Mammary epithelial cell (primary cell): ENCODE measurements at regions of chr12 and their contacts with region 1.

Region 1: DNA sequence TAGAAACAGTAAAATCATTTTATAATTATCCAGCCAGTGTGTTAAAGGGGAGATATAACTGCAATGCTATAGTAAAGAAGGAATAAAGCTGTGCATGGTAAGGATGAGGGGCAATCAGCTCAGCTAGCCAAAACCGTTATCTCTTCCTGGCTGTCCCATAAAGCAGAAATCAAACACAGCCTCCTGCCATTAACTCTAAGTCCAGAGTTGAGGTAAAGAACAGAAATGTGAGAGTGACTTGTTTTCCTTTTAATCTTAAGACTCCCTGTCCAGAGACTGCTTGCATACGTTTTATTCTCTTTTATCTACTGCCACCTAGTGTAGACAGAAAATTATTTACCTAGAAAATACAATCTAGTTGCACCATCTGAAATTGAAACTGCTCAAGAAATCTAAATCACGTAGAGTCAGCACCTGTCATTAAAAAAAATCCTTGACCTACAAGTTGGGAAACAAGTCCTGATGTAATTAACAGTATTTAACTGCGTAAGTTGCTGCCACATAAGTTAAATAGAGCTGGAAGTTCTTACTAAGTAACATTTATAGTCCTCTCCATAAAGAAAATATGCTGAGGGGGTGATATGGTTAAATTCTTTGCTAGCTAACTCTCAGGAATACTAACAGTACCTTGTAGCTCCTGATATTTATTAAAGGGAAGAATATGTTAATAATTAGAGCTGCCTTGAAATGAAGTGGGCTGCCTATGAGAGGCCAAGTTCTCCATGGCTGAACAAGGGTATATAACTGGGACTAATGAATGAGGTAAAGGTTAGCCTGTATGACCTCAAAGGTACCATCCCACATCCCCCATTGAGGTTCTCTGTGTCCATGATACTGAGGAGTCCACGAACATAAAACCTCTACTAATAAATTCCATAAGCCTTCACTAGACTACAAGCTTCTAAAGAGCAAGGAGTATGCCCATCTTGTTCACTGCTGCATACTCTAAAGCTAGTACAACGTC is 62.7 kb downstream of the GALNT4 start:
- DNase-seq: peak; percentile 71
- H3K4me3 ChIP-seq: peak overlapping the region in 2 of 3 experiments; percentile 25 to 34
- H3K27ac ChIP-seq: peak overlapping the region; percentile 31
- H3K4me1 ChIP-seq: peaks cover 22% of the 10 kb centered on the region
- H3K27me3 ChIP-seq: no peaks in the 10 kb centered on the region
- CTCF ChIP-seq: peak in 1 of 2 donors; percentile 52

Region 2: GRCh38 chr12:89040146-89040964 is 421.6 kb before region 1 on chr12:
- CTCF ChIA-PET with region 1: no interaction called
- dilution Hi-C with region 1: loop called (anchors 10 kb)
- in situ Hi-C with region 1: no loop called
- intact Hi-C with region 1: no loop called
- DNase-seq: peak; percentile 78
- H3K4me3 ChIP-seq: no peak overlapping the region
- H3K27ac ChIP-seq: no peak overlapping the region
- H3K4me1 ChIP-seq: no peaks in the 10 kb centered on the region
- H3K27me3 ChIP-seq: no peaks in the 10 kb centered on the region
- CTCF ChIP-seq: no peak

Region 3: DNA sequence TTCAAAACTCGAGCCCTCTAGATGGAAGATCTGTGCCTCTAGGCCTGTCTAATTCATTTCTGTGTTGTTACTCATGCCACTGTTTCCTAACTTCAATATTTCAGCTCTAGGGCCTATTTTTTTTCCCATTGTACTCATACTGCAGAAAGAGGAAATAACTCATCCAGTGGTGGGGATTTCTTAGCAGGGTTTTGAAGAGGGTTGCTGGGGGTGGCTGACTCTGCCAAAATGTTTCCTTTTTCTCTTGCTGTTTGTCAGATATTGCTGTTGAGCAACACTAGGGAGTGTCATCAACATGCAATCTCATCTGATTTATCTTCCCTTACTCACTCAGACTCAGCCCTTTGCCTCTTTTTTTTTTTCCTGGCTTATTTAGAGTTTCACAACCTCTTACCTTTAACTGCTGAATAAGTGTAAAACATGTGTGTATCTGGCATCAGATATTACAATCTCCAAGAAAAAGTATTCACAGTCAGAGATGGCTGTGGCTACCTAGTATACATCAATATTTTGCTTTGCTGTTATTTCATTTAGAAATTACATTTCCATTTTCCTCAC is 299.1 kb before region 1 on chr12:
- CTCF ChIA-PET with region 1: no interaction called
- dilution Hi-C with region 1: no loop called
- in situ Hi-C with region 1: no loop called
- intact Hi-C with region 1: loop called (anchors 5 kb)
- DNase-seq: peak; percentile 100
- H3K4me3 ChIP-seq: no peak overlapping the region
- H3K27ac ChIP-seq: peak overlapping the region; percentile 77
- H3K4me1 ChIP-seq: peaks cover 44% of the 10 kb centered on the region
- H3K27me3 ChIP-seq: no peaks in the 10 kb centered on the region
- CTCF ChIP-seq: no peak

Region 4: GRCh38 chr12:89352492-89353187 is 109.3 kb before region 1 on chr12 and contains the start of gene DUSP6:
- CTCF ChIA-PET with region 1: interaction called, 14 read pairs
- dilution Hi-C with region 1: no loop called
- in situ Hi-C with region 1: loop called (anchors 10 kb)
- intact Hi-C with region 1: loop called (anchors 1 kb)
- DNase-seq: peak; percentile 100
- H3K4me3 ChIP-seq: peak within 1 kb of the TSS; percentile 85 to 93 (median 92)
- H3K27ac ChIP-seq: peak within 1 kb of the TSS; percentile 91
- H3K4me1 ChIP-seq: peaks cover 43% of the 10 kb centered on the region
- H3K27me3 ChIP-seq: no peaks in the 10 kb centered on the region
- CTCF ChIP-seq: no peak
- total RNA-seq, gene DUSP6: 190 to 291 TPM

Region 5: GRCh38 chr12:89384050-89384758 is 77.7 kb before region 1 on chr12:
- CTCF ChIA-PET with region 1: no interaction called
- dilution Hi-C with region 1: loop called (anchors 5 kb)
- in situ Hi-C with region 1: no loop called
- intact Hi-C with region 1: no loop called
- DNase-seq: peak; percentile 84
- H3K4me3 ChIP-seq: peak overlapping the region in 1 of 3 experiments; percentile 23
- H3K27ac ChIP-seq: peak overlapping the region; percentile 88
- H3K4me1 ChIP-seq: peaks cover 34% of the 10 kb centered on the region
- H3K27me3 ChIP-seq: no peaks in the 10 kb centered on the region
- CTCF ChIP-seq: no peak